ENCODE measurements at regions of chr6 and their contacts with region 1.

Region 1: GRCh38 chr6:100283283-100283682 is 181.4 kb downstream of the SIM1 start:
- DNase-seq: no peak
- H3K4me3 ChIP-seq: no peak overlapping the region
- H3K27ac ChIP-seq: no peak overlapping the region
- H3K4me1 ChIP-seq: peaks cover 0 to 6% (median 2%) of the 10 kb centered on the region in 4 experiments; a peak in 3 of 7 replicates
- H3K27me3 ChIP-seq: no peaks in the 10 kb centered on the region
- CTCF ChIP-seq: no peak
- EP300 ChIP-seq: no peak
- POLR2A ChIP-seq: no peak
- RAD21 ChIP-seq: no peak; a peak in 1 of 4 replicates

Region 2: GRCh38 chr6:100296810-100297544 is 13.7 kb after region 1 on chr6:
- CTCF ChIA-PET with region 1: interaction called, 14 read pairs
- POLR2A ChIA-PET with region 1: interaction called, 8 read pairs
- DNase-seq: no peak
- H3K4me3 ChIP-seq: no peak overlapping the region
- H3K27ac ChIP-seq: no peak overlapping the region
- H3K4me1 ChIP-seq: peaks cover 0 to 4% (median 0%) of the 10 kb centered on the region in 4 experiments; a peak in 2 of 7 replicates
- H3K27me3 ChIP-seq: no peaks in the 10 kb centered on the region
- CTCF ChIP-seq: no peak
- EP300 ChIP-seq: no peak
- POLR2A ChIP-seq: no peak
- RAD21 ChIP-seq: no peak